GM10248 (cell line): ENCODE measurements at regions of chr1 and their contacts with region 1.

Region 1: GRCh38 chr1:246506674-246507481 is at the start of gene SMYD3:
- DNase-seq: peak; percentile 94
- CTCF ChIP-seq: peak; percentile 23

Region 2: DNA sequence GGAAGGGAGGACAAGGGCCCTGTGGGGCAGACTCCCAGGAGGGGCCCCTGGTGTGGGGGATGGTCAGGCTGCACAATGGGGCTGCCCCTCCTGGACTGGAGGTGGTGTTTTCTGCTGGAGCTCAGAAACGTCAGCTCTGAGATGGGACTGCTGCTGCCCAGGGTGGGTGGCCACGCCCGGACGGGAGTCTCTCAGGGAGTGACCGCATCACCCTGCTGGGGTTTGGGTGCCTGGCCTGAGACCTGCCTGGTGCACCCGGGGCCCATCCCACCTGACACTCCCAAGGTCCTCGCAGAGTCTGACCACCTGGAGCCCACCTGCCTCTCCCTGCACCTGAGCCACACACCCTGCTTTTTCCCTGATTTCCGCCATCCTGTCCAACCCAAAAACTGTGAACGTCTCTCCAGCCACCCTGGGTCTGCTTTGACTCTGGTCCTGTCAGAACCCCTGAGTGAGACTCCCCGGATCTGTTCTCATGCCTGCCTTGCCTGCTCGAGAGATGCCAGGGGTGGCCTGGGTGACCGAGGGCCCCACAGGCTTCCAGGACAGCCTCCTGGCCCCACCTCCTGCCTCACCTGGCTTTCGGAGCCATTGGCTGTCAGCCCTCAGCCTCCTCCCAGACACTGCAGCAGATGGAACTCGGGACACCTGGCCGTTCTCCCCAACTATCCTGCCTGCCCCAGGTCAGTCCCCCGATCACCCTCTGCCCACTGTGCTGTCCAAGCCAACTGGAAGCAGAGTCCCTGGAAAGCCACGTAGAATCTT is 11.7 kb after region 1 on chr1:
- CTCF ChIA-PET with region 1: interaction called, 21 read pairs
- POLR2A ChIA-PET with region 1: no interaction called
- DNase-seq: no peak
- CTCF ChIP-seq: no peak

Region 3: GRCh38 chr1:246528933-246529731 is 22.3 kb after region 1 on chr1:
- CTCF ChIA-PET with region 1: no interaction called
- POLR2A ChIA-PET with region 1: no interaction called
- DNase-seq: no peak
- CTCF ChIP-seq: no peak